IMR-90 (cell line): ENCODE measurements at regions of chr7 and their contacts with region 1.

Region 1: DNA sequence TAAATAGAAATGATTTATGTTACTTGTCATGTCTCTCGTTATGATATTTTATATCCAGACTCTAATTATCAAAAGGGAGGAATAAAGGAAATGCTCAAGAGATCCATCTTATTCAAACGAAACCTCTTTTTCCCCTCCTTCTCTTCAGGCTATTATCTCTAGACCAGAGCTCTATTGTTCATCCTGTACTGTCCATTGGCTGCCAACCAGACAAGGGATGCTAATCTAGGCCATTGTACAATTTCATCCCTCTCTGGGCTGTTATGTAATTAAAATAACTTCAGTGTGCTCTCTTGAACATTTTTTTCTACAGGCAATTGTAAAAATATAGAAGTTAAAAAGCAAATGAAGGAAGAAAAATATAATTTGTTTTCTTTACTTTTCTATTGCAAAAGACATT is 220.4 kb downstream of the HDAC9 start:
- DNase-seq: no peak
- ATAC-seq: no peak
- H3K4me3 ChIP-seq: no peak overlapping the region
- H3K27ac ChIP-seq: no peak overlapping the region
- H3K4me1 ChIP-seq: no peaks in the 10 kb centered on the region
- H3K27me3 ChIP-seq: no peaks in the 10 kb centered on the region
- CTCF ChIP-seq: no peak
- POLR2A ChIP-seq: no peak
- RAD21 ChIP-seq: no peak

Region 2: DNA sequence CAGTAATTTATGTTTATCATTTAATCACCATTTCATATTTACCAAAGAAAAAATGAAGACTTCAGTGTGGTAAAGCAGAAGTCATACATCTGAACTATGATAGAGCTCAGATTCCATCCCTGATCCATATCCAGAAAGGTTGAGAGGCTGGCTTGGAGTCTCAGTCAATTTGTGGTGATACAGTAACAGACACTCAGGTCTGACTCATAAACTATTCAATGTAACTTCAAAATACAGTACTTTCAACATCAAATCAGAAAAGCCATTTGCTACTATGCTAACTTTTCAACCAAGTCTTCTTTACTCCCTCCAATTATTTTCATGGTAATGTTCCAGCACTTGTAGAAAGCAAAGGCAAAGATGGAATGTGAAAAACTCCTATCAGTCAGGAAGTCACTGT is 30.0 kb before region 1 on chr7:
- CTCF ChIA-PET with region 1: interaction called, 3 read pairs
- POLR2A ChIA-PET with region 1: no interaction called
- dilution Hi-C with region 1: no loop called
- in situ Hi-C with region 1: no loop called
- intact Hi-C with region 1: loop called (anchors 1 kb)
- DNase-seq: peak; percentile 67
- ATAC-seq: peak; percentile 53; the same call in 1 of the 2 replicates
- H3K4me3 ChIP-seq: no peak overlapping the region
- H3K27ac ChIP-seq: no peak overlapping the region
- H3K4me1 ChIP-seq: no peaks in the 10 kb centered on the region
- H3K27me3 ChIP-seq: no peaks in the 10 kb centered on the region
- CTCF ChIP-seq: no peak
- POLR2A ChIP-seq: no peak
- RAD21 ChIP-seq: no peak

Region 3: GRCh38 chr7:18753972-18754610 is 38.1 kb after region 1 on chr7:
- CTCF ChIA-PET with region 1: no interaction called
- POLR2A ChIA-PET with region 1: no interaction called
- dilution Hi-C with region 1: no loop called
- in situ Hi-C with region 1: no loop called
- intact Hi-C with region 1: loop called (anchors 5 kb)
- DNase-seq: peak; percentile 94
- ATAC-seq: peak; percentile 84
- H3K4me3 ChIP-seq: no peak overlapping the region
- H3K27ac ChIP-seq: no peak overlapping the region
- H3K4me1 ChIP-seq: peaks cover 3% of the 10 kb centered on the region; the same call in 1 of the 2 replicates
- H3K27me3 ChIP-seq: no peaks in the 10 kb centered on the region
- CTCF ChIP-seq: no peak
- POLR2A ChIP-seq: no peak
- RAD21 ChIP-seq: no peak